ENCODE measurements at regions of chr13 and their contacts with region 1.

Region 1: DNA sequence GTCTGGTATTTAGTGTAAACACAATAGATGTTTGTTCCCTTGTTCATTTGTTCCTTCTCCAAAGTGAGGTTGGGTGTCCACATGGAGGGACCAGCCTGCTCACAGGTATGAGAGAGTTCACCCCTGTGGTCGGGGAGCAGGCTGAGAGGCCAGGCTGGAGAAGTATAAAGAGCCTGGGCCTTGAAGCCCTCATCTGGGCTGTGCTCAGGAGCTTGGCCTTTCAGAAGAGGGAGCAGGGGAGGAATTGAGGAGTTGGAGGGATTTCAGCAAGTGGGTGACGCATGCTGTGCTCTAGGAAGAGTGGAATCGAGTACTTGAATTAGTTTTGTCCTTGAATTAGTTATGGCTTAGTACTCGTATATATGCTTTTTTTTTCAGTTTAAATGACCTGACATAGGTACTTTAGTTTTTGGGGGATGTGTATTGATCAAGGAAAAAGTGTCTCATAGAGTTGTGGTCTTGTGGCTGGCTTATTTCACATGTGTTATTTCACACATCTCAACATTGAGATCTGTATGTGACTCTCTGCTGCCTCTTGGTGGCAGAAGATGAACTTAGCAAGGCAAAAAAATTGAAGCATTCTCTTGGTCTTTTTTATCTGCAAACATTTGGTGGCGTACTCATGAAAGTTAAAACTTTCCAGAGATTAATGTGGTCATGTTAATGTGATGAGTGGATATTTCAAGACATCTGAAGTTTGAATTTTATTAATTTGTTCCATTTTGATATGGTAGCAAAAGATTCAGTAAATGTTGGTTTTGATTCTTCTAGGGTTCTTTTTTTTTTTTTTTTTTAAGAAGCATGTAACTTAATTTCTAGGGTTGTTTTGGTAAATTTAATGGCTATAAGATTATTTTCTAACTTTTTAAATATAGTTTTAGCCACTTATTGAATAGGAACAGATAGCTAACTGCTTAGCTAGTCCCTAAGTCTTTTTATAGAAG is 54.3 kb downstream of the SLAIN1 start:
- DNase-seq: no peak
- H3K4me3 ChIP-seq: no peak overlapping the region
- H3K27ac ChIP-seq: no peak overlapping the region
- H3K4me1 ChIP-seq: no peaks in the 10 kb centered on the region
- H3K27me3 ChIP-seq: no peaks in the 10 kb centered on the region
- CTCF ChIP-seq: peak; percentile 28 to 79 (median 70)
- POLR2A ChIP-seq: no peak

Region 2: GRCh38 chr13:77492982-77493381 is 258.8 kb before region 1 on chr13:
- intact Hi-C with region 1: loop called (anchors 5 kb)
- DNase-seq: no peak
- H3K4me3 ChIP-seq: no peak overlapping the region
- H3K27ac ChIP-seq: no peak overlapping the region
- H3K4me1 ChIP-seq: no peaks in the 10 kb centered on the region
- H3K27me3 ChIP-seq: no peaks in the 10 kb centered on the region
- CTCF ChIP-seq: peak in 3 of 4 experiments; percentile 34 to 58 (median 49)
- POLR2A ChIP-seq: no peak

Region 3: DNA sequence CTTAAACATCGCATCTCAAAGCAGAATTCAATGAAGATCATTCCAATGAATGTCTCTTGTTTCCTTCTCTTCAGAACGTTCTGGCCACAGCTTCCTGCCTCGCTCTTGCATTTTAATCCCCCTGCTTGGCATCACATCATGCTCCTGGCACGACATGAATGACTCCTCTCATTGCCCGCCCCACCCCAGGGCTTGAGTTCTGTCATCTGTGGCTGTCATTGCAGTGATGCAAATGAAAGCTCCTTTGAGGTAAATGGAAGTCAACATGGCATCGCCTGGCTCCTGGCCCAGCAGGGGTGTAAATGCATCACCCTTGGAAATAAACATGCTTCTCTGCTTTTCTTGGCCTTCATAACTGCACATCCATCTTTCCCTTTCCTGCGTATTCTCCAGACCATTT is 167.7 kb before region 1 on chr13:
- intact Hi-C with region 1: loop called (anchors 5 kb)
- DNase-seq: peak; percentile 25
- H3K4me3 ChIP-seq: no peak overlapping the region
- H3K27ac ChIP-seq: no peak overlapping the region
- H3K4me1 ChIP-seq: no peaks in the 10 kb centered on the region
- H3K27me3 ChIP-seq: no peaks in the 10 kb centered on the region
- CTCF ChIP-seq: no peak
- POLR2A ChIP-seq: no peak

Region 4: GRCh38 chr13:78160793-78161192 is 409.0 kb after region 1 on chr13:
- intact Hi-C with region 1: no loop called
- DNase-seq: no peak
- H3K4me3 ChIP-seq: no peak overlapping the region
- H3K27ac ChIP-seq: no peak overlapping the region
- H3K4me1 ChIP-seq: no peaks in the 10 kb centered on the region
- H3K27me3 ChIP-seq: no peaks in the 10 kb centered on the region
- CTCF ChIP-seq: no peak
- POLR2A ChIP-seq: no peak

Measured in prostate gland (tissue), 2 donors.